SK-N-SH (cell line): ENCODE measurements at regions of chr15 and their contacts with region 1.

Region 1: GRCh38 chr15:40274350-40275274 is 8.3 kb downstream of the ANKRD63 start:
- DNase-seq: peak; percentile 88
- H3K4me3 ChIP-seq: peak overlapping the region in 1 of 2 experiments; percentile 30; a peak in 1 of 4 replicates
- H3K27ac ChIP-seq: no peak overlapping the region
- H3K4me1 ChIP-seq: peaks cover under 1 to 5% of the 10 kb centered on the region in 2 experiments; a peak in 1 of 4 replicates
- H3K27me3 ChIP-seq: no peaks in the 10 kb centered on the region
- CTCF ChIP-seq: peak; percentile 100
- EP300 ChIP-seq: no peak
- RAD21 ChIP-seq: peak; percentile 93

Region 2: DNA sequence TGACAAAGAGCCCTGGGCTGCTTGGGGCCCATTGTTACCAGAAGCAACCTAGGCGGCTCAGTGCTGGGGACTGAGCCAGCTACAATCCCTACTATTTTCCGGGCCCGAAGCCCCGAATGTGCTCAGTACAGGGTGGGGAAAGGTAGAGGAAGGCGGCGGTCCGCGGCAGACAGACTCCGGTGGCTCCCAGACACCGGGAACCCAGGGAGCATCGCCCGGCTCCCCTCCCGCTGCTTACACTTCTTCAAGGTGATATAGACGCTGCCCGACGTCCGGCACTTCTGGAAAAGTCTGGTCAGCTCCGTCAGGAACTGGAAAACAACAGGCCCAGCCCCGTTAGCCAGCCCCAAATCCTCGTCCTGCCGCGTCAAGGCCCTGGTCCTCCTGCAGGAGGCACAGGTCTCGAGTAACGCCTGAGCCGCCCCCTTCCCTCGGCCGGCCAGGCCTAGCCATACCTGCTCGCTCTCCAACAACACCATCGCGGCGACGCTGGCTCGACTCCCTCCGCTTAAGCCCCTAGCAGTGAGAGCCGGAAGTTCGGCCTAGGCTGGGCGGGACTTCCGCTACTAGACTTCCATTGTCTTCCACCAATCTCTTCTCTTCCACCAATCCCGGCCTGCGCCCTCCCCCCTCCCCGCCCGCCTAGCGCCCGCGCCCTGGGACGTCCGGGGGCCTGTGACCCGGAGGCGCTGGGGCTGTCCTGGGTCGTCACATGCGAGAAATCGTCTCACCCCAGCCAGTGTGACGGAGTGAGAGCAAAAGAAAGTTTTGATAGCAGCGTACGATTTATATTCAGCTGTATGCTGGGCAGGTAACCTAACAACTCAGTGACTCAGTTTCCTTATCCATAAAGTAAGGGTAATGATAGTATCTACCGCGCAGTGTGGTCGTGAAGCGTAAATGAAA is 235.7 kb before region 1 on chr15 and contains the start of gene SRP14:
- CTCF ChIA-PET with region 1: interaction called, 70 read pairs
- POLR2A ChIA-PET with region 1: no interaction called
- DNase-seq: peak; percentile 95
- H3K4me3 ChIP-seq: peak within 1 kb of the TSS; percentile 77 to 94
- H3K27ac ChIP-seq: peak within 1 kb of the TSS; percentile 88 to 92
- H3K4me1 ChIP-seq: peaks cover 0 to 20% of the 10 kb centered on the region in 2 experiments; a peak in 2 of 4 replicates
- H3K27me3 ChIP-seq: no peaks in the 10 kb centered on the region
- CTCF ChIP-seq: no peak
- EP300 ChIP-seq: peak in 1 of 2 experiments; percentile 46; a peak in 1 of 4 replicates
- RAD21 ChIP-seq: no peak
- polyA plus RNA-seq, gene SRP14: 489 and 501 TPM in 2 replicates

Region 3: GRCh38 chr15:40092256-40092978 is 182.2 kb before region 1 on chr15:
- CTCF ChIA-PET with region 1: interaction called, 11 read pairs
- POLR2A ChIA-PET with region 1: no interaction called
- DNase-seq: peak; percentile 54
- H3K4me3 ChIP-seq: no peak overlapping the region
- H3K27ac ChIP-seq: peak overlapping the region; percentile 13 to 76; a peak in 3 of 4 replicates
- H3K4me1 ChIP-seq: peaks cover 34 to 83% of the 10 kb centered on the region in 2 experiments
- H3K27me3 ChIP-seq: no peaks in the 10 kb centered on the region
- CTCF ChIP-seq: no peak
- EP300 ChIP-seq: peak in 1 of 2 experiments; percentile 56; a peak in 1 of 4 replicates
- RAD21 ChIP-seq: 0 out of 2 replicates have a peak, but pooled peaks have one; percentile 22

Region 4: DNA sequence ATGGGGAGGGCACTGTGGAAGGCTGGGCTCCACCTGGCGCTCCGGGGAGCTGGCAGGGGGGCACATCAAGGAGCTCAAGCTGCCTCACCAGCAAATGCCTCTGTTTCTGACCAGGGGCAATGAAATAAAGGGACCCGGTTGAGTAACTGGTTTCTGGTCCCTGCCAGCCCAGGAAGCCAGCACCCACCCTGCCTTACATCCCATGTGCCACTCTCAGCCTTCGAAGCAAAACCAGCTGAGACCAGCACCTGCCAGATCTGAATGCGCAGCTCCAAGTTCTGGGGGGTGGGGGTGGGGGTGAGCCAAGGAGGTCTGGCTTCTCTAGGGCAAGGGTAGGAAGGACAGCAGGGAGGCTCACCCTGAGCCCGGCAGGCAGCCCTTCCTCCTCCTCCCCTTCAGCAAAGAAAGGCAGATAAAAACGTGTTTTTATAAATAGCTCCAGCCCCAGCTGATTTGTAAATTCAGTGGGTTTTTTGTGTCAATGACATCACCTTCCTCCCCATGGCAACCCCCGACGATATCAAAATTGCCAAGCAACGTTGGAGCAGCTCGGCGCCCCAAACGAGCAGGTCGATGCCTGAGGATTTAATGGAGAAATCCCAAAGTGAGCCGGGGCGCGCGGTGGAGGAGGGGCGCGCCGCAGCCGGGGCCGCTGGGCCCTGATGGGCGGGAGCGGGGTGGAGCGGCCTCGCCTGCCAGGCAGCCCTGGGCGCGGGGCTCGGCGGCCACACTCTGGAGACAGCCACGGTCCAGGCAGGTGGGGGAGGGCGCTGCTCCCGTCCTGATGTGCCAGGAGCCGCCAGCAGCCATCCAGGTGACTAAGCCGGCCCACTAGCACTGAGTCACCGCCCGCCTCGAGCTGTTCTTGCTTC is 35.8 kb before region 1 on chr15 and contains the start of gene PAK6:
- CTCF ChIA-PET with region 1: interaction called, 720 read pairs
- POLR2A ChIA-PET with region 1: interaction called, 3 read pairs
- DNase-seq: peak; percentile 92
- H3K4me3 ChIP-seq: peak within 1 kb of the TSS; percentile 40 to 56
- H3K27ac ChIP-seq: no peak within 1 kb of the TSS
- H3K4me1 ChIP-seq: peaks cover 5 to 24% of the 10 kb centered on the region in 2 experiments; a peak in 2 of 4 replicates
- H3K27me3 ChIP-seq: peaks cover 3% of the 10 kb centered on the region; the same call in 1 of the 2 replicates
- CTCF ChIP-seq: no peak
- EP300 ChIP-seq: no peak
- RAD21 ChIP-seq: no peak
- polyA plus RNA-seq, gene PAK6: 0.07 and 0.16 TPM in 2 replicates

Region 5: GRCh38 chr15:40338041-40338657 is 63.5 kb after region 1 on chr15:
- CTCF ChIA-PET with region 1: interaction called, 184 read pairs
- POLR2A ChIA-PET with region 1: no interaction called
- DNase-seq: peak; percentile 95
- H3K4me3 ChIP-seq: peak overlapping the region; percentile 51 to 77; a peak in 2 of 4 replicates
- H3K27ac ChIP-seq: peak overlapping the region; percentile 96 to 98; a peak in 3 of 4 replicates
- H3K4me1 ChIP-seq: peaks cover 56 to 62% of the 10 kb centered on the region in 2 experiments; a peak in 3 of 4 replicates
- H3K27me3 ChIP-seq: no peaks in the 10 kb centered on the region
- CTCF ChIP-seq: peak; percentile 89
- EP300 ChIP-seq: no peak
- RAD21 ChIP-seq: peak; percentile 81

Region 6: DNA sequence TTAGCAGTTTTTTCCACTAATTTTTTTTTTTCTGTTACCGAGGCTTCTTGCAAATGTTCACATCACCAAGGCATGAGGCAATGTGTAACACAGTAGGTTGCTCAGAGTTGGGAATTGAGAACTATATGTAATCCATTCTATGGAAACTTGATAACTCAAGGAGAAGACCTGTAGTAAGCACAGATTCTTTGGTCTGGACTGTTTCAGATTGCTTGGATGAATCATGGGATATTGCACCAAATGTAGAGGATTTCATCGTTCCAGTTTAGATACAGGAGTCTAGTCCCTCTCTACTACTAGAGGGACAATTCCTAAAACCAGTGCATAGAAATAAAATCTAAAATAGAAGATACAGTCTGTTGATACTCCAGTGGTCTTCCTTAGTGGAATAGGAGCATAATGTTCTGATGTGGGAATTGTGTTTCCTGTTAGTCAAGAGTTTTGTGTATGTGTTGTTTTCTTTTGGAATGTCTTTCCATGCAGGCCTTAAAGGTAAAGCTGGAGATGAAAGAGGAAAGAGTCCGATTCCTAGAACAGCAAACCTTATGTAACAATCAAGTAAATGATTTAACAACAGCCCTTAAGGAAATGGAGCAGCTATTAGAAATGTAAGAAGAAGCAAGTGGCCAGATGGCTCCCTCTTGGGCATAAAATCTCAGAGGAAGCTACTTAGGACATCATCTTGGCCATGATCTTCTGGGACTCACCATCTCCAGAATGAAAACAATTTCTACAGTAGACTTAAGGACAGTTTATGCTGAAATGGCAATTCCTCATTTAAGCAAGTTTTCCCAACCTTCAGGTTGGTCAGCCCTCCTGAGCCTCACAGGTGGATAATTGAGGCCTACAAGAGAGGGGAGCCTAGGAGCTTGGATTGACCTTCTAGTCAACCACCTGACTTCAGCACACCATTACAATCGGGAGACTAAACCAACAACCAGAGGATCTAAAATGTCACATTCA is 118.7 kb after region 1 on chr15:
- CTCF ChIA-PET with region 1: no interaction called
- POLR2A ChIA-PET with region 1: no interaction called
- DNase-seq: no peak
- H3K4me3 ChIP-seq: no peak overlapping the region
- H3K27ac ChIP-seq: no peak overlapping the region
- H3K4me1 ChIP-seq: no peaks in the 10 kb centered on the region
- H3K27me3 ChIP-seq: no peaks in the 10 kb centered on the region
- CTCF ChIP-seq: no peak
- EP300 ChIP-seq: no peak
- RAD21 ChIP-seq: no peak

Region 7: DNA sequence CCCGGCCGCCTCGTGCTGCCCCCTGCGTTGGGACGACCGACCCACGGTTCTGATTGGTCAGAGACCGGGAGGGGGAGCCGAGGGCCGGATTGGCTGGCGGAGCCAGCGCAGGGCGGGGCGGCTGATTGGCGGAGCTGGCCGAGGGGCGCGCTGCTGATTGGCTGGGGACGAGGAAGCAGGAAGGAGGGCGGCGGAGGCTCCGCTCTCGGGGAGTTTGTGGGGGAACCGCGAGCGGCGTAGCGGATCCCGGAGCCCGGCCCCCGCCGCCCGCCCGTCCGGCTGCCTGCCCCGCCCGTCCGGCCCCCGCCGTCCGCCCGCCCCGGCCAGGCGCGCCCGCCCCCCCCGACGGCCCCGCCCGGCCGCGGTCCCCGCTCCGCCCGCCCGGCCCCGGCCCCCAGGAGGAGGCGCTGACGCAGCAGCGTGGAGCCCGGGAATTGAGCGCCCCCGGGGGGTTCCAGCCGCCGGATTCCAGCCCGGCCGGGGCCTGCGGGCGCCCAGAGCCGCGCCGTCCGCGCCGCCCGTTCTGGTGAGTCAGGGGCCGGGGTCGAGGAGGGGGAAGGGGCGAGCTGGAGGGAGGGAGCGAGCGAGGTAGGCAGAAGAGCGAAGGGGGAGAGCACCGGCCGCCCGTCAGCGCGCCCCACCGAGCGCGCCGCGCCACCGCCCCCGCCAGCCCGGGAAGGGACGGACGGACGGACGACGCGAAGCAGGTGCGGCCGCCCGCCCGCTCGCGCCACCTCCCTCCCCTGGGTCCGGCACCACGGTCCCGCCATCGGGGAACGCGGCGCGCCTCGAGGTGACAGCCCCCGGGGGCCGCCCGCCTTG is 166.3 kb after region 1 on chr15 and contains the start of gene BAHD1:
- CTCF ChIA-PET with region 1: interaction called, 10 read pairs
- POLR2A ChIA-PET with region 1: no interaction called
- DNase-seq: peak; percentile 100
- H3K4me3 ChIP-seq: peak within 1 kb of the TSS; percentile 75 to 77
- H3K27ac ChIP-seq: peak within 1 kb of the TSS in 1 of 2 experiments; percentile 72; a peak in 2 of 4 replicates
- H3K4me1 ChIP-seq: peaks cover 12 to 38% of the 10 kb centered on the region in 2 experiments; a peak in 3 of 4 replicates
- H3K27me3 ChIP-seq: no peaks in the 10 kb centered on the region; the same call in 1 of the 2 replicates
- CTCF ChIP-seq: peak; percentile 17; the same call in 1 of the 2 replicates
- EP300 ChIP-seq: no peak
- RAD21 ChIP-seq: no peak
- polyA plus RNA-seq, gene BAHD1: 4.7 and 5.5 TPM in 2 replicates

Region 8: DNA sequence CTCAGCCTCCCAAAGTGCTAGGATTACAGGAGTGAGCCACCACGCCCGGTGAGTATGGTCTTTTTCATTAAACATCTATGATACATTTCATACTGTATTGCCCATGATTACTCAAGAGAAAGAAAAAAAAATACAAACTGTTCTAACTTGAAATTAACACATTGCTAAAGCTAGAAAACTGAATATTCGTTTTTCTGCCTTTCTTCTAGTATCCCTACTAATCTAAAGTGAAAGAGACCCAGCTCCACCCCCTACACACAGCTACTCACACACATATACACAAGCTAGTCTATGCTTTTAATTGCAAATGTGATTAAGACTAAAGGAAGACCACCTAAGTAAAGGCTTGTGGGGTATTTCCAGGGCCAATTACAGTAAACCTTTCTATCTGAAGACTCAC is 798.4 kb after region 1 on chr15:
- CTCF ChIA-PET with region 1: no interaction called
- POLR2A ChIA-PET with region 1: no interaction called
- DNase-seq: no peak
- H3K4me3 ChIP-seq: no peak overlapping the region
- H3K27ac ChIP-seq: no peak overlapping the region
- H3K4me1 ChIP-seq: no peaks in the 10 kb centered on the region
- H3K27me3 ChIP-seq: no peaks in the 10 kb centered on the region
- CTCF ChIP-seq: no peak
- EP300 ChIP-seq: no peak
- RAD21 ChIP-seq: no peak